Activated CD4-positive, alpha-beta T cell treated with anti-CD3 and anti-CD28 coated beads for 36 hours (primary cell): ENCODE measurements at regions of chr17 and their contacts with region 1.

Region 1: DNA sequence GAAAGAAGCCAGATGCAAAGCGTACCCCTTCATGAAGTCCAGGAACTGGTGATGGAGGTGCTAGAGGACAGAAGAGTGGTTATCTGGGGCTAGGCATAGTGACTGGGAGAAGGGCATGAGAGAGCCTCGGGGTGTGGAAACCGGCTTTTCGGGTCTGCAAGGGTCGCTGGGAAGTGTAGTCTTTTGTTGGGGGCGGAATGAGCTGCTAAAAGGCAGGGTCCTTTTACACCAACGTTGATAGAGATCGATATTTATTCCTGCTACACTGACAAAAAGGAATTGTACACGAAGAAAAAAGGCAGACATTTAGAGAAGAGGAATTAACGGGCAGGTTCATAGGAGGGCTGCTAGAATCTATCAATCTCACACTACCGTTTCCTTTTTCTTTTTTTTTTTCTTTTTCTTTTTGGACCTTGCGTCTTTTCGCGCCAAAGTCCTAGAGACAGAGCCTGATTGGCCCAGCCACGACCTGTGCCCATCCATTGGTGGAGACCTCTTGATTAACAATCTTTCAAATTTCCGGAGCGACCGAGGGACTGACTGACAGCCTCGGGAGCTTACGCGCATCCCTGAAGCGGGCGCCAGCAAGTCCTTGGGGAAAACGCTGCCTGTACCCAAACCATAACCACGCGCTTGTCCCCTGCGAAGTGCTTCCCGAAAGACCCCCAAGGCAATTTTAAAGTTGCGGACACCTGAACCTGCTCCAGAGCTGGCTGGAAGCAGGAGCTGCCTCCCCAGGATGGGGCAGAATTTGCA is 27.7 kb upstream of the DHRS7B start:
- DNase-seq: peak; percentile 89
- ATAC-seq: peak; percentile 99
- H3K4me3 Mint-ChIP-seq: peak overlapping the region; percentile 94
- H3K27ac Mint-ChIP-seq: peak overlapping the region; percentile 92
- H3K4me1 Mint-ChIP-seq: peaks cover 2% of the 10 kb centered on the region
- H3K27me3 Mint-ChIP-seq: no peaks in the 10 kb centered on the region

Region 2: GRCh38 chr17:20800146-20800545 is 299.0 kb before region 1 on chr17:
- CTCF ChIA-PET with region 1: interaction called, 3 read pairs
- POLR2A ChIA-PET with region 1: no interaction called
- intact Hi-C with region 1: loop called in 1 of 2 experiments (anchors 2 kb)
- DNase-seq: no peak
- ATAC-seq: no peak
- H3K4me3 Mint-ChIP-seq: no peak overlapping the region
- H3K27ac Mint-ChIP-seq: no peak overlapping the region
- H3K4me1 Mint-ChIP-seq: peaks cover 10% of the 10 kb centered on the region
- H3K27me3 Mint-ChIP-seq: no peaks in the 10 kb centered on the region

Region 3: DNA sequence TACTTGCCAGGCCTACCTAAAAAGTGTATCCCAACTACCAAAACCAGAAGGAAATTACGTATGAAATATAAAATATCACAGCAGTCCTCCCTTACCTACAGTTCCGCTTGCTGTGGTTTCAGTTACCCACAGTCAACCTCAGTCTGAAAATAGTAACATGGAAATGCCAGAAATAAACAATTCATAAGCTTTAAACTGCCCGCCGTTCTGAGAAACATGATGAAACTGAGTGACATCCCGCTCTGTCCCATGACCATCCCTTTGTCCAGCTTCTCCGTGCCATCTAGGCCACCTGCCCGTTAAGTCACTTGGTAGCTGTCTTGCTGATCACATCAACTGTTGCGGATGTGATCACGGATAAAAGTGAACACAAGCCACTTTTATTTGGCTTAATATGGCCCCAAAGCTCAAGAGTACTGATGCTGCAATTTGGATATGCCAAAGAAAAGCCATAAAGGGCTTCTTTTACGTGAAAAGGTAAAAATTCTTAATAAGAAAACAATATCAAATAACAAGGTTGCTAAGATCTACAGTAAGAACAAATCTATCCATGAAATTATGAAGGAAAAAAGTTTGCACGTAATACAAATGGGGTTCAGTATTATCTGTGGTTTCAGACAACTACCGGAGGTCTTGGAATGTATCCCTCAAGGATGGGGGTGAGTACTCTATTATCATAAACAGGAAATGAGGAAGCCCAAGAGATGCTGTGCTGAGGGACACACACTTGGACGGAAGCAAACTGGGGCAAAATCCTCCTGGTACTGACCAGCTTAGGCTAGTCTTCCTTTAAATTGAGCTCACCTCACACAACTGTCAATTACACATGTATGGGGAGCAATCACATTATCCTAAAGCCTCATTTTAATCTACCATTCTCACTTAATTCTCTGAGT is 64.5 kb before region 1 on chr17:
- CTCF ChIA-PET with region 1: interaction called, 10 read pairs
- POLR2A ChIA-PET with region 1: no interaction called
- intact Hi-C with region 1: loop called in 1 of 2 experiments (anchors 2 kb)
- DNase-seq: peak; percentile 61
- ATAC-seq: peak; percentile 50
- H3K4me3 Mint-ChIP-seq: peak overlapping the region; percentile 63
- H3K27ac Mint-ChIP-seq: peak overlapping the region; percentile 92
- H3K4me1 Mint-ChIP-seq: peaks cover 84% of the 10 kb centered on the region
- H3K27me3 Mint-ChIP-seq: no peaks in the 10 kb centered on the region

Region 4: GRCh38 chr17:21126645-21127510 is 27.8 kb after region 1 on chr17 and contains the start of gene DHRS7B:
- CTCF ChIA-PET with region 1: interaction called, 15 read pairs
- POLR2A ChIA-PET with region 1: no interaction called
- intact Hi-C with region 1: loop called (anchors 1 kb)
- DNase-seq: peak; percentile 98
- ATAC-seq: peak; percentile 96
- H3K4me3 Mint-ChIP-seq: peak within 1 kb of the TSS; percentile 91
- H3K27ac Mint-ChIP-seq: peak within 1 kb of the TSS; percentile 98
- H3K4me1 Mint-ChIP-seq: peaks cover 23% of the 10 kb centered on the region
- H3K27me3 Mint-ChIP-seq: no peaks in the 10 kb centered on the region
- total RNA-seq, gene DHRS7B: 12.8 to 15.0 TPM

Region 5: GRCh38 chr17:21140911-21141310 is 41.8 kb after region 1 on chr17:
- CTCF ChIA-PET with region 1: no interaction called
- POLR2A ChIA-PET with region 1: no interaction called
- intact Hi-C with region 1: no loop called
- DNase-seq: no peak
- ATAC-seq: no peak
- H3K4me3 Mint-ChIP-seq: no peak overlapping the region
- H3K27ac Mint-ChIP-seq: no peak overlapping the region
- H3K4me1 Mint-ChIP-seq: no peaks in the 10 kb centered on the region
- H3K27me3 Mint-ChIP-seq: no peaks in the 10 kb centered on the region

Region 6: DNA sequence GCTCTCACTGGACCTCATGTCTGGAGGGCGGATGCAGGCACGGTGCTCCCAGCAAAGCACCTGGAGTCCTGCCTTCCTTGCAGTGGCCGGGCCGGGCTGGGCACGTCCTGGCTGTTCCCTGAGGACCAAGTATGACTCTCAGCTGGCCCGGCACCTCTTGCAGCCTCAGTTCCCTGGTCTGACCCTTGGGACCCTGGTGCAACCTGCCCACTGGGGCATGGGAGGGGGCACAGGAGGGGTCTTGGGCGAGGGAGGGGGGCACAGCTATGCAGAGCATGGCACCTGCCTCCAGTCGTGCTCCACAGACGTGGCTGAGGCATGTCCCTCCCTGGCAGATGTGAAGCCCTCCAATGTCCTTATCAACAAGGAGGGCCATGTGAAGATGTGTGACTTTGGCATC is 205.0 kb after region 1 on chr17:
- CTCF ChIA-PET with region 1: no interaction called
- POLR2A ChIA-PET with region 1: no interaction called
- intact Hi-C with region 1: no loop called
- DNase-seq: no peak
- ATAC-seq: no peak
- H3K4me3 Mint-ChIP-seq: no peak overlapping the region
- H3K27ac Mint-ChIP-seq: no peak overlapping the region
- H3K4me1 Mint-ChIP-seq: no peaks in the 10 kb centered on the region
- H3K27me3 Mint-ChIP-seq: no peaks in the 10 kb centered on the region

Region 7: GRCh38 chr17:21318439-21318838 is 219.3 kb after region 1 on chr17:
- CTCF ChIA-PET with region 1: no interaction called
- POLR2A ChIA-PET with region 1: no interaction called
- intact Hi-C with region 1: loop called in 1 of 2 experiments (anchors 5 kb)
- DNase-seq: no peak
- ATAC-seq: no peak
- H3K4me3 Mint-ChIP-seq: no peak overlapping the region
- H3K27ac Mint-ChIP-seq: no peak overlapping the region
- H3K4me1 Mint-ChIP-seq: peaks cover 7% of the 10 kb centered on the region
- H3K27me3 Mint-ChIP-seq: no peaks in the 10 kb centered on the region

Region 8: DNA sequence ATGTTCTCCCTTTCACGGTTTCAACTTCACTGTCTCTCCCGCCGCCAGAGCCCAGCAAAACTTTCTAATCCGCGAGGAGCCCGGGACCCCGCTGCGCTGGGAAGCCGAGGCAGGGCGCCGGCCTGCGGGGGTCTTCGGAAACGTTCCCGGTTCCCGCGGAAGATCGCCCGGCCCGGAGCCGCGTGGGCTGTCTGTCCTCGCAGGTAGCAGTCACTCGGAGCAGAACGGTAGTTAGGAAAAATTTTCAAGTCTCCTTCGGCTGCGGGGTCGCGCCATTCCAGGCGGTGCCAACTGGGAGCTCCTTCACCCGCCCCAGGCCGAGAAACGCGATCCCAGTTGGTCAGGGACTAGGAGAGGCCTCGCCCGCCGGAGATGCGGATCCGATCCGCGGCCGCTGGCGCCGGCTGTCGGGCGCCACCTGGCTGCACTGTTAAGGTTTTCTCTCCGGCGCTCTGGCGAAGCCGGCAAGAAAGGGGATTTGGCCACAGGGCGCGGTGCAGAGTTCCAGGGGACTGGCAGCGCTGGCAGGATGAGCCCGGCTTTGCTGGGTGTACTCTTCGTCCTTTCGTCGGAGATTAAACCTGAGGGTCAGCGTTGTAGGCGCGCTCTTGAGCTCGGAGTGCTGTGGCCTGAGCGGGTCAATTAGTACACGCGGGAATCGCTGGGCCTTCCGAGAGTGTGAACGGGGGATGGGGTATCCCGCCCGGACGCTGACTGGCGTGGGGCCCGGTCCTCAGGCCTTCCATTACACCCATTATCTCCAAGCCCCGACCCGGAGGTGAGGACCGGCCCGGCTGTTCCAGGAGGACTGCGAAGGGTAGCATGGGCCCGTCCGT is 412.5 kb after region 1 on chr17:
- CTCF ChIA-PET with region 1: no interaction called
- POLR2A ChIA-PET with region 1: no interaction called
- intact Hi-C with region 1: no loop called
- DNase-seq: peak; percentile 82
- ATAC-seq: peak; percentile 87
- H3K4me3 Mint-ChIP-seq: peak overlapping the region; percentile 60
- H3K27ac Mint-ChIP-seq: no peak overlapping the region
- H3K4me1 Mint-ChIP-seq: peaks cover 14% of the 10 kb centered on the region
- H3K27me3 Mint-ChIP-seq: peaks cover 31% of the 10 kb centered on the region